ENCODE measurements at regions of chr16 and their contacts with region 1.

Region 1: GRCh38 chr16:77190478-77191258 is at the start of gene MON1B:
- DNase-seq: peak; percentile 97 to 99
- ATAC-seq: peak; percentile 98 to 99 (median 99)
- H3K4me3 ChIP-seq: peak within 1 kb of the TSS; percentile 99
- H3K27ac ChIP-seq: peak within 1 kb of the TSS; percentile 98
- H3K4me1 ChIP-seq: peaks cover 8% of the 10 kb centered on the region
- H3K27me3 ChIP-seq: no peaks in the 10 kb centered on the region
- CTCF ChIP-seq: peak; percentile 21
- total RNA-seq, gene MON1B: 13.3 to 22.2 (median 18.4) TPM

Region 2: GRCh38 chr16:77211880-77212740 is 21.4 kb after region 1 on chr16:
- intact Hi-C with region 1: loop called in 1 of 2 experiments (anchors 2 kb)
- DNase-seq: peak; percentile 57 to 73
- ATAC-seq: peak; percentile 58 to 74 (median 64)
- H3K4me3 ChIP-seq: peak overlapping the region; percentile 72
- H3K27ac ChIP-seq: peak overlapping the region; percentile 24
- H3K4me1 ChIP-seq: peaks cover 9% of the 10 kb centered on the region
- H3K27me3 ChIP-seq: peaks cover 0 to 21% (median 0%) of the 10 kb centered on the region in 3 donors
- CTCF ChIP-seq: no peak